B cell (primary cell): ENCODE measurements at regions of chr2 and their contacts with region 1.

Region 1: GRCh38 chr2:155377266-155377680 is 678.8 kb downstream of the KCNJ3 start:
- DNase-seq: peak; percentile 17
- ATAC-seq: no peak
- H3K4me3 ChIP-seq: no peak overlapping the region
- H3K4me3 Mint-ChIP-seq: no peak overlapping the region
- H3K27ac ChIP-seq: no peak overlapping the region
- H3K27ac Mint-ChIP-seq: no peak overlapping the region
- H3K4me1 ChIP-seq: no peaks in the 10 kb centered on the region
- H3K4me1 Mint-ChIP-seq: no peaks in the 10 kb centered on the region
- H3K27me3 ChIP-seq: no peaks in the 10 kb centered on the region
- H3K27me3 Mint-ChIP-seq: peaks cover 2% of the 10 kb centered on the region
- CTCF ChIP-seq: peak; percentile 28

Region 2: GRCh38 chr2:155099784-155100183 is 277.5 kb before region 1 on chr2:
- CTCF ChIA-PET with region 1: no interaction called
- POLR2A ChIA-PET with region 1: no interaction called
- intact Hi-C with region 1: no loop called
- DNase-seq: no peak
- ATAC-seq: no peak
- H3K4me3 ChIP-seq: no peak overlapping the region
- H3K4me3 Mint-ChIP-seq: no peak overlapping the region
- H3K27ac ChIP-seq: no peak overlapping the region
- H3K27ac Mint-ChIP-seq: no peak overlapping the region
- H3K4me1 ChIP-seq: no peaks in the 10 kb centered on the region
- H3K4me1 Mint-ChIP-seq: no peaks in the 10 kb centered on the region
- H3K27me3 ChIP-seq: no peaks in the 10 kb centered on the region
- H3K27me3 Mint-ChIP-seq: no peaks in the 10 kb centered on the region
- CTCF ChIP-seq: no peak

Region 3: DNA sequence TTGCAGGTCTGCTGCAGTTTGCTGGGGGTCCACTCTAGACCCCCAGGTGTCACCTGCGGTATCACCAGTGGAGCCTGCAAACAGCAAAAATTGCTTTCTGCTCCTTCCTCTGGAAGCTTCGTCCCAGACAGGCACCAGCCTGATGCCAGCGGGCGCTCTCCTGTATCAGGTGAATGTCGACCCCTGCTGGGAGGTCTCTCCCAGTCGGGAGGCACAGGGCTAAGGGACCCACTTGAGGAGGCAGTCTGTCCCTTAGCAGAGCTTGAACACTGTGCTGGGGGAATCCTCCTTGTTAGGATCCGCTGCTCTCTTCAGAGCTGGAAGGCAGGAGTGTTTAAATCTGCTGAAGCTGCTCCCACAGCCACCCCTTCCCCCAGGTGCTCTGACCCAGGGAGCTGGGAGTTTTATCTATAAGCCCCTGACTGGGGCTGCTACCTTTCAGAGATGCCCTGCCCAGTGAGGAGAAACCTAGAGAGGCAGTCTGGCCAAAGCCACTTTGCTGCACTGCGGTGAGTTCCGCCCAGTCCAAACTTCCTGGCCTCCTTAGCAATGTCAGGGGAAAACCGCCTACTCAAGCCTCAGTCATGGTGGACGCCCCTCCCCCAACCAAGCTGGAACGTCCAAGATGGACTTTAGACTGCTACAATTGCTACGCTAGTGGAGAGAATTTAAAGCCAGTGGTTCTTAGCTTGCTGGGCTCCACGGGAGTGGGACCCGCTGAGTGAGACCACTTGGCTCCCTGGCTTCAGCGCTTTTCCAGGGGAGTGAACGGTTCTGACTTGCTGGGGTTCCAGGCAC is 26.3 kb before region 1 on chr2:
- CTCF ChIA-PET with region 1: no interaction called
- POLR2A ChIA-PET with region 1: no interaction called
- intact Hi-C with region 1: no loop called
- DNase-seq: no peak
- ATAC-seq: no peak
- H3K4me3 ChIP-seq: no peak overlapping the region
- H3K4me3 Mint-ChIP-seq: no peak overlapping the region
- H3K27ac ChIP-seq: no peak overlapping the region
- H3K27ac Mint-ChIP-seq: no peak overlapping the region
- H3K4me1 ChIP-seq: no peaks in the 10 kb centered on the region
- H3K4me1 Mint-ChIP-seq: no peaks in the 10 kb centered on the region
- H3K27me3 ChIP-seq: no peaks in the 10 kb centered on the region
- H3K27me3 Mint-ChIP-seq: no peaks in the 10 kb centered on the region
- CTCF ChIP-seq: no peak

Region 4: DNA sequence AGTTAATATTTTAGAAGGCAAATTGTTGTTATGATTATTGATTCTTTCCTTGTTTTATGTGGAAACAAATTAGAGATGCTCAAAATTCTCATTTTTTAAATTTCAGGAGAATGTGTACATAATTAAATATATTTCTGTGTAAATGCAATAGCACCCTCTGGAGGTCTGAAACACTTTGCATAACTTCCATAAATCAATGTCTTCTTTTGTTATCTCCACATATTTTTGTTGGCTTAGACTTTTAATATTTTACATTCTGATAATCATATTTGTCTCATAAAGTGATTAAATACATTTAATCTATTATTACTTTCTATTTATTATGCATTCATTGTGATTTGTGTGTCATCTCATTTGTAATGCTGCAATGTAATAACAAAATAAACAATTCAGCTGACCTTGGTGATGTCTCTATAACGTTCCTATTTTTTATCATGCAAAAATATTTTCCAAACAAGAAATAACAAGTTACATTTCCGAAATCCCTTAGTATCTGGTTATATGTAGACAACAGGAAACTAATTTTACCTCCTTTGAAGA is 1678.5 kb after region 1 on chr2:
- CTCF ChIA-PET with region 1: interaction called, 4 read pairs
- POLR2A ChIA-PET with region 1: no interaction called
- intact Hi-C with region 1: loop called (anchors 2 kb)
- DNase-seq: no peak
- ATAC-seq: no peak
- H3K4me3 ChIP-seq: no peak overlapping the region
- H3K4me3 Mint-ChIP-seq: no peak overlapping the region
- H3K27ac ChIP-seq: no peak overlapping the region
- H3K27ac Mint-ChIP-seq: no peak overlapping the region
- H3K4me1 ChIP-seq: no peaks in the 10 kb centered on the region
- H3K4me1 Mint-ChIP-seq: no peaks in the 10 kb centered on the region
- H3K27me3 ChIP-seq: no peaks in the 10 kb centered on the region
- H3K27me3 Mint-ChIP-seq: peaks cover 4% of the 10 kb centered on the region
- CTCF ChIP-seq: peak; percentile 43

Region 5: DNA sequence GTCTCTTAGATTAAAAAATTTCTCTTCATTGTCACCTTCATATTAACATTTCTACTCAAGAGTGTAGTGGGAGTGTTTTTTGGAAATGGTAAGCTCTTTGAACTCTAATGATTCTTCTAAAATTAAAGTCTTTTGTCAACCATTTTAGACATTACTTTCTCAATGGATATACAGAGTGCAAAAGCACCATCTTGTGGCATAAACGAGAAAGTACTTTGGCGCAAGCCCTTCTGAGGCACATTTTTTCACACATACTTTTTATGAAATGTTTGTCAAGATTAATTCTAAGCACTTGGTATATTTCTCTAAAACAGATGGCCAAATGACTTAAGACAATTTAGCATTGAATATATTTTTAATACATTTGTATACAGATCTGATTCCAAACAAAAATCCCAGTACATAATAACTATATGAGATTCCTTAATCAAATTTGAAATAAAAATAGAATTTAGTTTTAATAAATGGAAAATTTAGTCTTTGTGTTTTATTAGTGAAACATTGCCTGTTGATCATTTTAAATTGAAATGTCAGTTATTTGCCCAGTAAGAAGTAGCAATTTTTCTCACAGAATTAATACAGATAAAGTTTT is 1816.9 kb after region 1 on chr2:
- CTCF ChIA-PET with region 1: interaction called, 11 read pairs
- POLR2A ChIA-PET with region 1: no interaction called
- intact Hi-C with region 1: loop called (anchors 1 kb)
- DNase-seq: peak; percentile 33
- ATAC-seq: no peak
- H3K4me3 ChIP-seq: no peak overlapping the region
- H3K4me3 Mint-ChIP-seq: no peak overlapping the region
- H3K27ac ChIP-seq: no peak overlapping the region
- H3K27ac Mint-ChIP-seq: no peak overlapping the region
- H3K4me1 ChIP-seq: no peaks in the 10 kb centered on the region
- H3K4me1 Mint-ChIP-seq: no peaks in the 10 kb centered on the region
- H3K27me3 ChIP-seq: no peaks in the 10 kb centered on the region
- H3K27me3 Mint-ChIP-seq: peaks cover 3% of the 10 kb centered on the region
- CTCF ChIP-seq: peak; percentile 64